ENCODE measurements at regions of chr16 and their contacts with region 1.

Region 1: DNA sequence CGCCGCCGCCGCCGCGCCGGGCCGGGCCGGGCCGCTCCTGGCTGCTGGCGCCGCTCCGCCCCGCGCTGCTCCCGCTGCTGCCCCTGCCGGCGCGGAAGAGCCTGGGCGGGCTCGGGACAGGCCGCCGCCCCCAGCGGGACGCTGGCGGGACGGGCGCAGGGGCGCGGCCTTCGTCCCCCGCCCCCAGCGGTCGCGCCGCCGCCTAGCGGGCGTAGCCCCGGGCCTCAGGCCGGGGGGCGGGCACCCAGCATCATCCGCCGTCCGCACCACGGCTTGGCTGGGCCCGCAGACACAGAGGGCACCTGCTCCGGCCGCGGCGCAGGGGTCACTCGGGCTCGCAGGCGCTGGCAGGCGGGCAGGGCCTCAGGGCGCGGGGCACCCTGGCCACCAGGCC is at the start of gene AMFR:
- DNase-seq: peak in 1 of 2 donors; percentile 78
- H3K4me3 ChIP-seq: peak within 1 kb of the TSS; percentile 95 to 99
- H3K27ac ChIP-seq: peak within 1 kb of the TSS; percentile 84 to 97
- H3K4me1 ChIP-seq: peaks cover 0 to 21% of the 10 kb centered on the region in 2 donors
- H3K27me3 ChIP-seq: no peaks in the 10 kb centered on the region
- CTCF ChIP-seq: peak in 1 of 3 experiments; percentile 89
- total RNA-seq, gene AMFR: 112 TPM

Region 2: DNA sequence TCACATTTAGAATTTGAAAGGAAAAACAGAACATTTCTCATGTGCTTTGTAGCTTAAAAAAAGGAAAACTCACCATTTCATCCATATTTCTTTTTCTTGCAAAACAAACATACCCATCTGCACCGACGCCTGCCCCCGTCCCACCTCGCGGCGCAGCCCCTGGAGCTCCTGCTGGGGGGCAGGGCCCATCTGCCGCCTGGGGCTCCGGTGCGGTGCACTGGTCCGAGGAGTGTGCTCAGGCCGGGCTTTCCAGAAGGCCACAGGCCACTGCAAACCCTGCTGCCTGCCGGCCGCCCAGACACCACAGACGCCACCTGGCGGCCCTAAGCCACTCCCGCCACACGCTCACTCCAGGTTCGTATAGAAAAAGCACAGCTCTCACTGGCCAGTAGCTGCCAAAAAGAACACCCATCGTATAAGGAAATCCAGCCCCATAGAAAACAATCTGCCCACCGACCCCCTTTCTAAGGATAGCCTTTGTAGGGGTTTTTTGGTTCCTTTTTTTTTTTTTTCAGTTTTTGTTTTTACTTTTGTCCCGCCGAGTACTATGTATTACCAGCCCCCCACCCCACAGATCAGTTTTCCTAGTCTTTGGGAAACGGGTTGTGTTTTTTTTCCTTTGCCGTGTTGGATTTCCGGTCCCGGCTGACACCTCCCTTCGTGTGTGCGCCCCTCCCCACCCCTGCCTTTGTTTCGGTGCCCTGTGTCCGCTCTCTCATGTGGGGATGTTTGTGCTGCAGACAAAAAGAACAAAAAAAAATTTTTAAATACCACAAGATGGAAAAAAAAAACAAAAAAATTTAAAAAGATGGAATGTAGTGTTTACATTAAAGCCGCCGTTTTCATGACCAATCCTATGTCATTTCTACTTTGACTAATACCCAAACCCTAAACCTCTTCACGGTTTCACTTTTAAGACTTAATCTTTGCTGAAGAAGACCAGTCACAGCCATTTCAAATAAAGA is 68.9 kb before region 1 on chr16:
- intact Hi-C with region 1: loop called (anchors 2 kb)
- DNase-seq: peak in 1 of 2 donors; percentile 87
- H3K4me3 ChIP-seq: peak overlapping the region; percentile 51 to 68
- H3K27ac ChIP-seq: peak overlapping the region; percentile 66 to 90
- H3K4me1 ChIP-seq: peaks cover 3 to 5% of the 10 kb centered on the region in 2 donors
- H3K27me3 ChIP-seq: no peaks in the 10 kb centered on the region
- CTCF ChIP-seq: peak; percentile 47 to 92 (median 81)

Region 3: DNA sequence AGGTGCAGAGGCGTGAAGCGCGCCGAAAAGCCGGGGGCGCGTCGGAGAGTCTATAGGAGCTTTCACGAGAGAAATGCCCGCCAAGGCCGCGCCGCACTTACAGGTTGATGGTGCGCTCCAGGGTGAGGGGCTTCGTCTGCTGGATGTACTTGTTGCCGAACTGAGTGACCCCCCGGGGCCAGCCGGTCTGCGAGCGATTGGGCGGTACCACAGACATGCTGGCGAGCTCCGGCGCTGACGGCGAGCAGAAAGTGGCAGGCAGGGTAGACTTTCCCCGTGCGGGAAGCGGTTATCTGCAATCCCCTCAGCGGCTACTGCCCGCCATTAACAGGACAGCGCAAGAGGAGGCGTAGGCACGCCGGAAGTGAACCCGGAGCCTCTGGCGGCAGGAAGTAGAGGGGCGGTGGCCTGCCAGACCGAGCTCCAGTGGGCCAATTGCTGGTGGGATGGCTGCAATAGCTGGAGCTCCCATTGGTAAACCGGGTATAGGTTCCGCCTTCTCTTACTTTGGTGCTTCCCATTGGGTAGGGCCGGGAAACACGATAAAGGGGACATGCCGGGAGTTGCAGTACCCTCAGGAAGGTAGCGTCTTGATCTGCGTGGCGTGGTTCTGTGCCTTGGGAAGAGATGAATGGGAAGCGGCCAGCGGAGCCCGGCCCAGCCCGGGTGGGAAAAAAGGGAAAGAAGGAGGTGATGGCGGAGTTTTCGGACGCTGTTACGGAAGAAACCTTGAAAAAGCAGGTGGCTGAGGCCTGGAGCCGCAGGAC is 25.7 kb after region 1 on chr16 and contains the starts of genes NUDT21 and OGFOD1:
- intact Hi-C with region 1: loop called (anchors 2 kb)
- DNase-seq: peak; percentile 88 to 97
- H3K4me3 ChIP-seq: peak within 1 kb of the TSS; percentile 86 to 90
- H3K27ac ChIP-seq: peak within 1 kb of the TSS; percentile 84 to 92
- H3K4me1 ChIP-seq: peaks cover 23 to 26% of the 10 kb centered on the region in 2 donors
- H3K27me3 ChIP-seq: no peaks in the 10 kb centered on the region
- CTCF ChIP-seq: no peak
- total RNA-seq, gene NUDT21: 5.3 TPM
- total RNA-seq, gene OGFOD1: 21.9 TPM

Measured in ascending aorta (tissue), 2 donors.